Motor neuron (in vitro differentiated cells): ENCODE measurements at regions of chr10 and their contacts with region 1.

Region 1: DNA sequence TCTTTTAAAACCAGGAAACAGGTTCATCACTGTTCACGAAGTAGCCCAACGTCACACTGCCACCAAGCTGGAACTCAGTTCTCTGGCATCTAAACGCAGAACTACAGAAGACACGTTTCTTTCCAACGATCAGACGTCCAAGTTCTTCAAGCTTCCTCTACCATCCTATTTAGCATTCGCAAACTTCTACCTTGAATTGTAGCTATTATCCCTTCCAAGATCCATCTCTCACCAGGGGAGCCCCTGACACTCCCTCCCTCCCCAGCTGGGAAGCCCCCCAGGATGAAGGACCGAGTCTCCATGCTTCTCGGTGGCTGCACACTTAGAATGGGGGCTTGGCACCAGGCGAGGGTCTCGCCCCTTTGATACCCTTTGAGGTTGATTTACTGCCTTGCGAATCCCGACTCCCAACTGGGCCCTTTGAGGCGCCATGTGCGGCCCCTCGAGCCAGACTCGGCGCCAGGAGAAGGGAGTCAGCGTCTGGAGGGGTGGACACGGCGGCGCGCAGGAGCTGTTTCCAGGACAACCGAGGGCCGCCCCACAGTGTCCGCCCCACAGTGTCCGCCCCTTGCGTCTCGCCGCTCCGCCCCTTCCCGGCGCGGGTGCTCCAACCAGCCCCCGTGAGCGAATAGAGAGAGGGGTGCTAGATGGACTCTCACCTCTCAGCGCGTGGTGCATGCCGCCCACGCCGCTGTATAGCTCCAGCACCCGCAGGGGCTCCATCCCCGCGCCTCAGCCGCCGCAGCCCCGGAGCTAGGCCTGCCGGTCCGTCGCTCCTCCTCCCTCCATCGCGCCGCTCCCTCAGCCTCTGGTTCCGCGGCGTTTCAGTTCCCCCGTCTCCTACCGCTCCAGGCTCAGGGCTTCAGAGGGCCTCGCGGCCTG is at the start of gene TRDMT1:
- ATAC-seq: peak; percentile 96 to 99 (median 98)
- H3K4me3 ChIP-seq: peak within 1 kb of the TSS; percentile 54 to 63 (median 59)
- H3K27ac ChIP-seq: peak within 1 kb of the TSS; percentile 98 to 99
- H3K4me1 ChIP-seq: peaks cover 7 to 22% of the 10 kb centered on the region in 2 donors
- total RNA-seq, gene TRDMT1: 3.5 to 15.7 (median 10.0) TPM

Region 2: GRCh38 chr10:17023386-17024298 is 177.5 kb before region 1 on chr10:
- in situ Hi-C with region 1: loop called in 2 of 9 experiments (anchors 10 to 25 kb)
- ATAC-seq: peak in 7 of 8 experiments; percentile 56 to 85 (median 71)
- H3K4me3 ChIP-seq: peak overlapping the region in 1 of 5 donors; percentile 10
- H3K27ac ChIP-seq: peak overlapping the region in 1 of 2 donors; percentile 10
- H3K4me1 ChIP-seq: peaks cover 43 to 63% of the 10 kb centered on the region in 2 donors

Region 3: GRCh38 chr10:17029581-17030271 is 171.4 kb before region 1 on chr10:
- in situ Hi-C with region 1: loop called in 2 of 9 experiments (anchors 10 to 25 kb)
- ATAC-seq: peak in 7 of 8 experiments; percentile 23 to 94 (median 51)
- H3K4me3 ChIP-seq: no peak overlapping the region
- H3K27ac ChIP-seq: no peak overlapping the region
- H3K4me1 ChIP-seq: peaks cover 26 to 37% of the 10 kb centered on the region in 2 donors